HepG2 (cell line): ENCODE measurements at regions of chr19 and their contacts with region 1.

Region 1: DNA sequence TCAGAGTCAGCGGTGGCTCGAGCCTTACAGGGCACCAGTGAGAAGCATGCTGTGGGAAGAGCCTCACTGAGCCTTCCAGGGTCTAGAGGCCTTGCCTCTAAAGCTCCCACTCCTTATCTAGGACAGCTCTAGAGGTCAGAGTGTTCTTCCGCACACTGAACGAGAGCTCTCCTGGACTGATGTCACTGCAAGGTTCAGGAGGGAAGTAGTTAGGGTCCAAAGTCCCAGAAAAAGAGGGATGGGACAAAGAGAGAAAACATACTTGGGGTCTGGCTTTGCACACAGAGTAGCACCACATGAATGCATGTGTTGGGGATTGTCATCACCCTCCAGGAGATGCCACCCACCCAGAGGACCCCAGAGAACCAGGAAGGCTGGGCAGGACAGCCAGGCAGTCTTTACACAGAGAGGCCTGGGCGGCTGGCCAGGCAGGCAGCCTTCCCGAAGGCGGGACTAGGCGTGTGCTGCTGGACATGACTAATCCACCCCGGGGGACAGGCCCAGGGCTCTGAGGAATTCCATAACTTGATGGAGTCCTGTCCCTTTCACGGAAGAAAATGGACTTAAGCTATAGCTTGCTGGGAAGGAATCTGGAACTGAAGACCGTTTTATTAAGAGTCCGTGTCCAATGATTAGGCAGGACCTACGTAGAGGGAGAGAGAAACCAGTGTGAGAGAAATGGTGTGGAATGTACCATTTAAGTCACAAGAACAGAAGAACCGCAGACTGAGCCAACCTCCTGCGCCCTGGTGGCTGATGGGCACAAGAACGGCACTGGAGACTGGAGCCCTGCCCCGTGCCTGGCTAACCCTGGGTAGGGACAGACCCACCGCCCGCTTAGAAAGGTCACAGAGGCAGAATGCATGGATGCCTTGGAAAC is 16.6 kb upstream of the EPHX3 start:
- DNase-seq: no peak
- ATAC-seq: peak; percentile 16
- H3K4me3 ChIP-seq: no peak overlapping the region
- H3K27ac ChIP-seq: peak overlapping the region; percentile 38
- H3K4me1 ChIP-seq: peaks cover 40% of the 10 kb centered on the region
- H3K27me3 ChIP-seq: no peaks in the 10 kb centered on the region
- CTCF ChIP-seq: no peak
- EP300 ChIP-seq: no peak
- POLR2A ChIP-seq: no peak
- RAD21 ChIP-seq: no peak

Region 2: DNA sequence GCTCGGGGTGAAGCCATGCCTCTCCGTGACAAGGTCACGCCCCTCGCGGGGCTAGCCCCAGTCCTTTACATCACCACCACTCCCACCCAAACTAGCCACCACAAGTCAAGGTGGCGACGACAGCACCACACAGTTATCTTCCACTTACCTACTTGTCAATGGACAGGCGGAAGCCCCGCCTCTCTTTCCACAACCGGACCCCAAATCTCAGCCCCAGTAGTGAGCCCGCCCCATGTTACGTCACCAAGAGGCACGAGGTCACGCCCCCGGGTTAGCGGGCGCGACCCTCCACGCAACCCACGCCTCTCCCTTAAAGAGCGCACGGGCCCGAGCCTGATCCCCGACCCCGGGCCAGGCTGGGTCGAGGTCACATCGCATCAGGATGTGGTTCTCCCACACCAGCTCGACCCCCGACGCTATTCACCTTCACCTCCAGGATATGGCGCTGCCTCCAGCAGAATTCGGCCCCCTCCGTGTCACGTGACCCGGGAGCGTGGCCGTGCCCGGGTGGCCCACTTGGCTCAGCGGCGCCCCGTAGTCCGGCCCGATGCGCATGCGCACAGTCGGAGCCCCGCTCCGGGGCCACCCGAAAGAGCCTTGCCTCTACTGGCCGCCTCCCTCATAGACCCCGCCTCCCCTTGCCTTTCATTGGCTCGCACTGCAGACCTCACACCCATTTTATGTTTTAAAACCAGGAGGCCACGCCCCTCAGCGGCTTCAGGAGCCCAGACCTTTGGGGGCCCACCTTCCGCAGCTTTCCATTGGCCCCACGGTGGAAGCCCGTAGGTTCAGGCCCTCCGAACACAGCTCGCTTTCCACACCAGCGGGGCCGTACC is 123.4 kb before region 1 on chr19:
- CTCF ChIA-PET with region 1: no interaction called
- POLR2A ChIA-PET with region 1: no interaction called
- in situ Hi-C with region 1: no loop called
- intact Hi-C with region 1: no loop called
- DNase-seq: peak; percentile 98
- ATAC-seq: peak; percentile 85
- H3K4me3 ChIP-seq: peak overlapping the region; percentile 75 to 89 (median 79)
- H3K27ac ChIP-seq: peak overlapping the region; percentile 91
- H3K4me1 ChIP-seq: peaks cover 36% of the 10 kb centered on the region
- H3K27me3 ChIP-seq: peaks cover 0 to 6% of the 10 kb centered on the region in 2 experiments; a peak in 2 of 5 replicates
- CTCF ChIP-seq: peak; percentile 45
- EP300 ChIP-seq: no peak
- POLR2A ChIP-seq: peak; percentile 70 to 77
- RAD21 ChIP-seq: peak; percentile 77

Region 3: DNA sequence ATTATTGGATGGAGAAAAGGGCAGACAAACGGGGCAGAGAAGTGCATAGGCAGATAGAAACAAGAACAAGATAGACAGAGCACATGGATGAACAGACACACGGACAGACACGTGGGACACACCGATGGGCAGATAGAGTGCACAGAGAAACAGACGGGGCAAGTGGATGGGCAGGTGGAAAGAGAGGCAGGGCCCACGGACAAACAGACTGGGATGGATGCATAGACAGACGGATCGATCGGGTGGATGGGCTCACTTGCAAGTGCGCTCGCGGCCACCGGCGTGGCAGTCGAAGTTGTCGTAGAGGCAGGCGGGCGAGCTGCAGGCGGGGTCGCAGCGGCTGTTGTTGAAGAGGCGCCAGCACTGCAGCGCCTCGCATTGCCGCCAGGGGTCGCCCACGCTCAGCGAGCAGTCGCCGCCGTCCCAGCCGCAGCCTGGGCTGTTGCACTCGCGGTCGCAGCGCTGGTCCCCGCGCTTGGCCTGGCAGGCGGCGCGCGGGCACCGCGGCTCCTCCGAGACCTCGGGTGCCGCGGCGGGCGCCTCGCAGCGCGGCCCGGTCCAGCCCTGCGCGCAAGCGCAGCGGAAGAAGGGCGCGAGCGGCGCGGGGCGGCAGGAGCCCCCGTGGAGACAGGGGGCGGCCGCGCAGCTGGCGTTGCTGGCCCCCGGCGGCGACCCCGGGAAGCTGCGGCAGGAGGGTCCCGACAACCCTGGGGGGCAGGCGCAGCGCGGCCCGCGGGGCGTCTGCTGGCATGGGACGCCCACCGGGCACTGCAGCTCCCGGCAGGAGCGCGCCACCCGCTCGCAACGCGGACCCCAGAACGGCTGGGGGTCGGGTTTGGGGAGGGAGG is 71.4 kb before region 1 on chr19:
- CTCF ChIA-PET with region 1: no interaction called
- POLR2A ChIA-PET with region 1: interaction called, 3 read pairs
- in situ Hi-C with region 1: no loop called
- intact Hi-C with region 1: loop called (anchors 5 kb)
- DNase-seq: peak; percentile 54
- ATAC-seq: peak; percentile 77
- H3K4me3 ChIP-seq: peak overlapping the region; percentile 20 to 63 (median 26); a peak in 4 of 6 replicates
- H3K27ac ChIP-seq: no peak overlapping the region
- H3K4me1 ChIP-seq: peaks cover 23% of the 10 kb centered on the region
- H3K27me3 ChIP-seq: no peaks in the 10 kb centered on the region
- CTCF ChIP-seq: peak; percentile 94
- EP300 ChIP-seq: no peak
- POLR2A ChIP-seq: no peak
- RAD21 ChIP-seq: peak; percentile 98